HCT116 (cell line): ENCODE measurements at regions of chr4 and their contacts with region 1.

Region 1: GRCh38 chr4:183659029-183659871 is at the starts of genes RWDD4 and TRAPPC11:
- DNase-seq: peak; percentile 88
- ATAC-seq: peak; percentile 99
- H3K4me3 ChIP-seq: peak within 1 kb of the TSS; percentile 66 to 77
- H3K27ac ChIP-seq: peak within 1 kb of the TSS; percentile 51; the same call in 1 of the 2 replicates
- H3K4me1 ChIP-seq: peaks cover 3 to 11% of the 10 kb centered on the region in 2 experiments; a peak in 2 of 4 replicates
- H3K27me3 ChIP-seq: no peaks in the 10 kb centered on the region
- CTCF ChIP-seq: no peak
- POLR2A ChIP-seq: peak; percentile 37
- RAD21 ChIP-seq: no peak
- total RNA-seq, gene RWDD4: 11.9 TPM
- total RNA-seq, gene TRAPPC11: 15.6 TPM

Region 2: DNA sequence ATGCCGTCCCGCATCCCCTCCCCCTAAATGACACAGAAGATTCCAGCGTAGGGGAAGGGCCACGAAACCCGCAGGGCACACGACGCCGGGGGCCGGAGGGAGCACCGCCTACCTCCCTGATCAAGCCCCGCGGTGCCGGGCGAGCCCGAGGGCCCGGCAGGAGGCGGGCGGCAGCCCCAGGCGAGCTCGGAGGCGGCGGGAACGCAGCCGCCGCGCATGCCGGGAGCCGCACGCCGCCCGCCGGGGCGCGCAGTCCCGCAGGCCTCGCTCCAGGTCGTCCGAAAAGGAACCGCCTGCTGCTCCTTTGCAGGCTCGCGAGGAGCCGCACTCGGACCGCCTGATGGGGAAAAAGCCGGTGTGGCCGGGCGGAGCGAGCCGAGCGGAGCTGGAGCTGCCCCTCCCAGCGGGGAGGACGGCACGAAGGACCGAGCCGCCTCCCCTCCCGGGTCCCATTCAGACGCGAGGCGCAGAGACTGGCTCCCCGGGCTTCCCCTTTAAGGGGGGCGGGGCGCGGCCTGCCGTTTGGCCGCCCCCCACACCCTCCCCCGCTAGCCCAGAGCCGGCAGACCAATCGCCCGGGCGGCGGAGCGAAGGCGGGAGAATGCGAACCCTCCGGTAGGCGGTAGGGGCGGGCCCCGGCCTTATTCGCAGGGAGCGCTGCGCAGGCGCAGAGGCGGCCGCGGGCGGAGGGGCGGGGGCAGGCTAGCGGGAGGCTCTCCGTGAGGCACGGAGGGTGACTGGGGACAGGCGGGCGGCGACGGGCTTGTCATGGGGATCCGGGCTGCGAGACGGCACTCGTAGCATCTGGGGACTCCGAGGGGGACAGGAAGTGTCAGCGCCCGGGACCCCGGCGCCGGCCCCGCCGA is 155.0 kb before region 1 on chr4:
- CTCF ChIA-PET with region 1: no interaction called
- POLR2A ChIA-PET with region 1: no interaction called
- RAD21 ChIA-PET with region 1: no interaction called
- intact Hi-C with region 1: loop called (anchors 10 kb)
- DNase-seq: peak; percentile 83
- ATAC-seq: peak; percentile 84
- H3K4me3 ChIP-seq: peak overlapping the region; percentile 62 to 69
- H3K27ac ChIP-seq: peak overlapping the region; percentile 91
- H3K4me1 ChIP-seq: peaks cover 5 to 6% of the 10 kb centered on the region in 2 experiments; a peak in 3 of 4 replicates
- H3K27me3 ChIP-seq: no peaks in the 10 kb centered on the region
- CTCF ChIP-seq: no peak
- POLR2A ChIP-seq: no peak
- RAD21 ChIP-seq: peak; percentile 21; the same call in 1 of the 2 replicates

Region 3: GRCh38 chr4:183783991-183784553 is 124.8 kb after region 1 on chr4:
- CTCF ChIA-PET with region 1: no interaction called
- POLR2A ChIA-PET with region 1: no interaction called
- RAD21 ChIA-PET with region 1: no interaction called
- intact Hi-C with region 1: no loop called
- DNase-seq: no peak
- ATAC-seq: no peak
- H3K4me3 ChIP-seq: no peak overlapping the region
- H3K27ac ChIP-seq: no peak overlapping the region
- H3K4me1 ChIP-seq: no peaks in the 10 kb centered on the region
- H3K27me3 ChIP-seq: no peaks in the 10 kb centered on the region
- CTCF ChIP-seq: no peak
- POLR2A ChIP-seq: no peak
- RAD21 ChIP-seq: no peak